Activated T-helper 1 cell treated with anti-CD3 and anti-CD28 coated beads, Interleukin-12 subunit alpha, Interleukin-12 subunit beta, Interleukin-2, Interleukin-4 antibody, amounts not matched to agents 30 ng/mL and 10 ng/mL and 1 ng/mL, durations not matched to agents 14 hours and 24 hours and 36 hours (primary cell): ENCODE measurements at regions of chr16 and their contacts with region 1.

Region 1: DNA sequence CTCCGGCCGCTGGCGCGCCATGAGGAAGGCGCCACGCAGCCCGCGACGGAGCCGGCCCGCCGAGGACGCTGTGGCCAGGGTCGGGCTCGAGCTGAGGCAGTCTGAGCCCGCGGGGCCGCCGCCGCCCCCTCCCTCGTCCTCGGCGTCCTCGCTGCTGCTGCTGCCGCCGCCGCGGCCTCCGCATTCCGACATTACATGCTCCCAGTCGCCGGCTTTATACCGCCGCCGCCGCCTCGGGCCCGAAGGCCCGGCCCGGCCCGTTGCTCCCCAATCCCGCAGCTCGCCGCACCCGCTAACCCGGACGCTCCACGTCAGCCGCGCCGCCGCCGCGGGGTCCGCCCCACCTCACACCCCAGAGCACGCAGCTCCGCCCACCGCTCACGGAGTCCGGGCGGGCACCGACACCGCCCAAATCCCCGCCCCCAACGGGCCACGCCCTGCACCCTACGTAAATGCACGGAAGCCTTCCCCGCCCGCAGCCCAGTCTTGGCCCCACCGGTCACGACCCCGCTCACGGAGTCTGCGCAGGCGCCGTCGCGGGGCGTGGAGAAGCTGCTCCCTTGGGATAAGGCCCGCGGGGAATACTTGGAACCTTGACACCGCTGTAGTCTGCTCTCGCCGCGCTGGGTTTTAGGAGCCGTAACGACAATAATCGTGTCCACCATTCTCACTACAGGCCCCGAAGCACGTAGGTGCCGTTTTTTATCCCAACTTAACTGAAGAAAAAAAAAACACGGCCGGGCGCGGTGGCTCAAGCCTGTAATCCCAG is at the start of gene TXNDC11:
- DNase-seq: peak; percentile 99
- H3K4me3 Mint-ChIP-seq: peak within 1 kb of the TSS; percentile 99
- H3K27ac Mint-ChIP-seq: peak within 1 kb of the TSS; percentile 93
- H3K4me1 Mint-ChIP-seq: peaks cover 54% of the 10 kb centered on the region
- H3K27me3 Mint-ChIP-seq: no peaks in the 10 kb centered on the region
- total RNA-seq, gene TXNDC11: 52.7 and 55.9 TPM in 2 replicates

Region 2: DNA sequence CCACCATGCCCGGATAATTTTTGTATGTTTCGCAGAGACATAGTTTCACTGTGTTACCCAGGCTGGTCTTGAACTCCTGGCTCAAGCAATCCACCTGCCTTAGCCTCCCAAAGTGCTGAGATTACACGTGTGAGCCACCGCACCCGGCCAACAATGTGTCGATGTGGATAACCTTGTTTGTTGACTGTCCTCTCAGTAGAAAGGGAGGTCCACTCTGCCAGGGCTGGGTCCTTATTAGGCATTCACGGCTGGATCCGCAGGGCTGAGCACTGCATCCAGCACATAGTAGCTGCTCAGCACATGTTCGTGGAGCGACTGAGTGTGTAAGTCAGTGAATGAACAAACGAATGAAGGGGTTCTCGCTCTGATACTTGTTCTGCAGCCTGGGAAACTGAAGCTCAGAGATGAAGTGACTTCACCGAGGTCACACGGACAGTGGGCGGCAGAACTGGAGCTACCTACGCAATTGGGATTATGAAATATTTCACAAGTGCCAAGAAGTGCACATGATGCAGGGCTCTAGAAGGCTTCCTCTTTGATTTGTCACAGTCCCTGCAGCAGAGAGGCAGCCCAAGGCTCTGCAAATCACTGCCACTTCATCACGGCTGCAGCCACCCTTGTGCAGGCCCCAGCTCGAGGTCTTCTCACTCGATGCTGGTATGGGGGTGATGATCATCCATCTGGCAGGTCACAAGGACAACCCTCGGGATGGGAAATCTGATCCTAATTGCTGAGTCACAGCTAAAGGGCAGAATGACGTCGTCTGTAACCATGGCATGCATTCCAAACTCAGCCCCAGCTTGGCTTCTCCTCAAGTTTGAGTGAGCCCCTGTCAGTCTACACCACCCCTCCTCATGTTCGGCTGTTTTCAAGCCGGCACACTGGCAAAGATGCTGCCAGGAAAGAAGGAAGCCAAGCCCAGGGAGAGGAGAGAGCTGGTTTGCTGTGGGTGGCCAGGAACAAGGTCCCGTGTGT is 102.5 kb before region 1 on chr16:
- intact Hi-C with region 1: no loop called
- DNase-seq: no peak
- H3K4me3 Mint-ChIP-seq: no peak overlapping the region
- H3K27ac Mint-ChIP-seq: no peak overlapping the region
- H3K4me1 Mint-ChIP-seq: peaks cover 5% of the 10 kb centered on the region
- H3K27me3 Mint-ChIP-seq: peaks cover 11% of the 10 kb centered on the region

Region 3: DNA sequence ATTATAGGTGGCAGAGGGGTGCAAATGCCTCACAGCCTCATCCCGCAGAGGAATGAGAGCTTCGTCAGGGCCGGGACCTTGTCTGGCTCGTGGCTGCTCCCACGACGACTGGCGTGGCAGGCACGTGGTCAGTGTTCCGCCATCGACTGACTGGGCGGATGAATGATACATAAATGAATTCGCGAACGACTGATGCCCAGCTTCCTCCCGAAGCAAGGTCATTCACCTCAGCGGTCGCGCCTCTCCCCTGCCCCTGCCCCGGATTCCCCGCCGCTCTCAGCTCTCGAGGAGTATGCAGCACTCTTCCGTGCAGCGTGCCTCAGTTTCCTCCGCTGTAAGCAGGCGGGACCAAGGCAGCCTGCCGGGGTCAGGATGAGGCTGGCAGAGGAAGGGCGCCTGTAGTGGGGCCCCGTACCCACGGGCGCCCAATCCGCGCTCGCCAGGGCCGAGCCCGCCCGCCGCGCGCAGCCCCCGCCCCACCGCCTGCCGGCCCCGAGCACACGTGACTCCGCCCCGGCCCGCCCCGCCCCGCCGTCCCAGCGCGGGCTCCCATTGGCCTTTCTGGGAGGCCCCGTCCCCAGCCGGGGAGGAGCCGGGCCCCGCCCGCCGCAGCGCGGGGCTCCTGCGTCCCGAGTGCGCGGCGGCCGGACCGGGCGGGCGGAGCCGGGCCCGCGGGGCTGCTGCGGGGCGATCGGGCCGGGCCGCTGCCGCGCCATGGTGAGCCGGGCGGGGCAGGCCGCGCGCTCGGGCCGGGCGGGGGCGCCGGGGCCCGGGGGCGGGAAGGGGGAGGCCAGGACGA is 74.7 kb before region 1 on chr16 and contains the start of gene SNN:
- intact Hi-C with region 1: loop called (anchors 1 kb)
- DNase-seq: peak; percentile 85
- H3K4me3 Mint-ChIP-seq: peak within 1 kb of the TSS; percentile 80
- H3K27ac Mint-ChIP-seq: no peak within 1 kb of the TSS
- H3K4me1 Mint-ChIP-seq: peaks cover 66% of the 10 kb centered on the region
- H3K27me3 Mint-ChIP-seq: no peaks in the 10 kb centered on the region
- total RNA-seq, gene SNN: 7.3 and 7.9 TPM in 2 replicates

Region 4: DNA sequence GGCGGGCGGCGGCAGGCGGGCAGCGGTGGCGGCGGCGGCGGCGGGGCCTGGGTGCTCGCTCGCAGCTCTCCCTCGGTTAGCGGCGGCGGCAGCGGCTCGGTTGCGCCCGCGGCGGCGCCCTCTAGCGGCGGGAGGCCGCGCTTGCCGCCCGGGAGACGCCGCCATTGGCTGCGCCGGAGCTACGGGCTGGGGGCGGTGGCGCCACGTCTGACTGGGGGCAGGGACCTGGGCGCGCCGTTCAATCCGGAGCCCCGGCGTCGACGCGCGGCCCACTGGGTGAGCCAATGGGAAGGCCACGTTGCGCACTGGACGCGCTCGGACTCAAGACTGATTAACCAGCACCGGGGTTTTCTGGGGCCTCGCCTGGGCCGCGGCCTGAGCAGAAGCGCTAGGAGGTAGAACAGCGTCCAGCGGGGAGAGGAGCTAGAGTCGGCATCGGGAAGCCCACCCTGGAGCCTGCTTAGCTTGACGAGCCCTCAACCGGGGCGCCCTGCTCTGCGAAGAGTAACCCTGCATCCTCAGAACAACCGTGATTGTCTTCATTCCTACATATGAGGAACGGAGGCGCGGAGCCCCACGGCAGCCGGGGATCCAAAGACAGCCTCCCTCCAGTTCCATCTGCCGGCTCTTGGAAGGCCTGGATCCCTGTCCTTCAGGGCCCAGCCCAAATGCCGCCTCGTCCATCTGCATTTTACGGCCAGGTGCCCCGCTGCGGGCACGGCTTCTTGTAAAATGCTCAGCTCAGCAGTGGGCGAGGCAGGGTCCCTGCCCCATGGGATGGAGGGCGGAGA is 54.6 kb after region 1 on chr16 and contains the start of gene ZC3H7A:
- intact Hi-C with region 1: loop called (anchors 1 kb)
- DNase-seq: peak; percentile 95
- H3K4me3 Mint-ChIP-seq: peak within 1 kb of the TSS; percentile 92
- H3K27ac Mint-ChIP-seq: peak within 1 kb of the TSS; percentile 94
- H3K4me1 Mint-ChIP-seq: peaks cover 75% of the 10 kb centered on the region
- H3K27me3 Mint-ChIP-seq: no peaks in the 10 kb centered on the region
- total RNA-seq, gene ZC3H7A: 71.0 and 78.9 TPM in 2 replicates

Region 5: GRCh38 chr16:11851294-11852091 is 108.8 kb after region 1 on chr16 and contains the start of gene RSL1D1:
- intact Hi-C with region 1: loop called (anchors 1 kb)
- DNase-seq: peak; percentile 95
- H3K4me3 Mint-ChIP-seq: peak within 1 kb of the TSS; percentile 99
- H3K27ac Mint-ChIP-seq: peak within 1 kb of the TSS; percentile 97
- H3K4me1 Mint-ChIP-seq: peaks cover 44% of the 10 kb centered on the region
- H3K27me3 Mint-ChIP-seq: no peaks in the 10 kb centered on the region
- total RNA-seq, gene RSL1D1: 345 and 369 TPM in 2 replicates

Region 6: GRCh38 chr16:11915644-11916523 is 173.2 kb after region 1 on chr16 and contains the start of gene GSPT1:
- intact Hi-C with region 1: loop called (anchors 1 kb)
- DNase-seq: peak; percentile 99
- H3K4me3 Mint-ChIP-seq: peak within 1 kb of the TSS; percentile 91
- H3K27ac Mint-ChIP-seq: peak within 1 kb of the TSS; percentile 94
- H3K4me1 Mint-ChIP-seq: peaks cover 32% of the 10 kb centered on the region
- H3K27me3 Mint-ChIP-seq: peaks cover 8% of the 10 kb centered on the region
- total RNA-seq, gene GSPT1: 207 and 214 TPM in 2 replicates

Region 7: GRCh38 chr16:11977376-11978041 is 234.8 kb after region 1 on chr16:
- intact Hi-C with region 1: loop called (anchors 2 kb)
- DNase-seq: no peak
- H3K4me3 Mint-ChIP-seq: peak overlapping the region; percentile 96
- H3K27ac Mint-ChIP-seq: peak overlapping the region; percentile 84
- H3K4me1 Mint-ChIP-seq: peaks cover 30% of the 10 kb centered on the region
- H3K27me3 Mint-ChIP-seq: peaks cover 2% of the 10 kb centered on the region

Region 8: GRCh38 chr16:12803203-12804097 is 1060.7 kb after region 1 on chr16 and contains the start of gene CPPED1:
- intact Hi-C with region 1: loop called (anchors 5 kb)
- DNase-seq: peak; percentile 89
- H3K4me3 Mint-ChIP-seq: peak within 1 kb of the TSS; percentile 93
- H3K27ac Mint-ChIP-seq: peak within 1 kb of the TSS; percentile 91
- H3K4me1 Mint-ChIP-seq: peaks cover 26% of the 10 kb centered on the region
- H3K27me3 Mint-ChIP-seq: no peaks in the 10 kb centered on the region
- total RNA-seq, gene CPPED1: 5.0 and 5.4 TPM in 2 replicates